ENCODE measurements at regions of chr7 and their contacts with region 1.

Region 1: GRCh38 chr7:129468087-129468486 is 33.9 kb downstream of the STRIP2 start:
- DNase-seq: peak; percentile 20
- H3K4me3 ChIP-seq: no peak overlapping the region
- H3K27ac ChIP-seq: no peak overlapping the region
- H3K4me1 ChIP-seq: peaks cover 6% of the 10 kb centered on the region
- H3K27me3 ChIP-seq: no peaks in the 10 kb centered on the region
- CTCF ChIP-seq: no peak

Region 2: DNA sequence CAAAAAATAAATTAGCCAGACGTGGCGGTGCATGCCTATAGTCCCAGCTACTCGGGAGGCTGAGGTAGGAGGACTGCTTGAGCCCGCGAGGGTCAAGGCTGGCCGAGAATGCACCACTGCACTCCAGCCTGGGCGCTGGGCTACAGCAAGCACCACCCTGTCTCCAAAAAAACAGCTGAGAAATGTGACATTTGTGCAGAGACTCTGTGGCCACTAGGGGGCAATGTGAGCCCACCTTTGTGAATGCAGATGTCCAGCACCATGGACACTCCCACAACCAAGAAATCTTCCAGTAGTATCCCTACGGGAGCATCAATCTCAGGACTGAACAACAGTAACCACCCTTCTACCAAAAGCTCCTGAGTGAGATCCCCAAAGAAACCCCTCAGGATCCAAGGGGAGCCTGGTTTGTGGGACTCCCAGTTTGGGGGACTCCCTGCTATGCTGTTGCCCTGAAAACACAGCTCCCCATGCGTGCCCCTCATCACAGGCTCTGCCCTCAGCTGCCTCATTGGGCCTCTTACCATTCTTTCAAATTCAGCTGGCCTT is 249.5 kb before region 1 on chr7:
- CTCF ChIA-PET with region 1: no interaction called
- dilution Hi-C with region 1: no loop called
- in situ Hi-C with region 1: loop called (anchors 10 kb)
- intact Hi-C with region 1: loop called (anchors 1 kb)
- DNase-seq: peak; percentile 72
- H3K4me3 ChIP-seq: no peak overlapping the region
- H3K27ac ChIP-seq: no peak overlapping the region
- H3K4me1 ChIP-seq: no peaks in the 10 kb centered on the region
- H3K27me3 ChIP-seq: no peaks in the 10 kb centered on the region
- CTCF ChIP-seq: peak; percentile 88 to 89

Region 3: GRCh38 chr7:129298268-129298893 is 169.7 kb before region 1 on chr7:
- CTCF ChIA-PET with region 1: no interaction called
- dilution Hi-C with region 1: no loop called
- in situ Hi-C with region 1: no loop called
- intact Hi-C with region 1: loop called (anchors 5 kb)
- DNase-seq: peak; percentile 25
- H3K4me3 ChIP-seq: no peak overlapping the region
- H3K27ac ChIP-seq: no peak overlapping the region
- H3K4me1 ChIP-seq: peaks cover 6% of the 10 kb centered on the region
- H3K27me3 ChIP-seq: no peaks in the 10 kb centered on the region
- CTCF ChIP-seq: peak; percentile 77 to 80

Region 4: GRCh38 chr7:129367700-129368388 is 100.2 kb before region 1 on chr7:
- CTCF ChIA-PET with region 1: interaction called, 5 read pairs
- dilution Hi-C with region 1: no loop called
- in situ Hi-C with region 1: loop called in 1 of 2 experiments (anchors 10 kb)
- intact Hi-C with region 1: loop called (anchors 1 kb)
- DNase-seq: peak; percentile 42
- H3K4me3 ChIP-seq: no peak overlapping the region
- H3K27ac ChIP-seq: no peak overlapping the region
- H3K4me1 ChIP-seq: no peaks in the 10 kb centered on the region
- H3K27me3 ChIP-seq: no peaks in the 10 kb centered on the region
- CTCF ChIP-seq: peak; percentile 82 to 89

Region 5: DNA sequence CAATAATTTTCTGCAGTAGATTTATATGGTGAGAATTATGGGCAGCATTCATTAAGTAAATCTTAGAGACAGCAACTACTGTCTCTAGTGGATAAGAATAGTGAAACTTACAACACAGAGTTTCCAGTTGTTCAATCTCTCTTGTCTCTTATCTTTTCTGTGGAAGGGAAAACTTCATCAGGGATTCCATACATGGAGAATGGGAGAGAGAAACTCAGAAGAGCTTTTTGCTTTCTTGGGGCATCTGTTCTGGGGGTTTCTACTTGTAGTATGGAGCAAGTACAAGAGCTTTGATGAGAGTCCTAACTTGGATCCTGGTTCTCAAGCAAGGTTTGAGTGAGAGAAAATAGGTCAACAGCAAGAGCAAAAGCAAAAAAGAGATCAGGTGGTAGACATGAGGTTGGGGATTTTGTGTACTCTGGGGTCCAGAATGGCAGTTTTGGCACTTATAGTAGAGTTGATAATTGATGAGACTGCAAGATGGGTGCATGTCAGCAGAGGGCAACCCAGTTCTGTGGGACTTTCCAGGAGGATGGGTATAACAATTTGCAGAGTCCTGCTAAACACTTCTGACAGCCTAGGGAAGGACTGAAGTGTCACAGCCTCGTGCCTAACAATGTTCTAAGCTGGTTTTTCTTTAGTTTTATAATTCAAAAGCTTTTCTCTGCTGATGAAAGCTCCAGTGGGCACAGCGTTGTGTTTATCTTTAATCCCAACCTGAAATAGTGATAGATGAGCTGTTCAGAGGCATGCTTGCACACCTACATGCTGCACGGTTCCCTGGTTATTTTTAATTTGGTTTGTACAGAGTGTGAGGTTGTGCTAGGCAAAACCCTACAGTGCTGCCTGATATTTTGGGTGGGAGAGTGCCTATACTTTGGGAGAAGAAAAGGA is 65.9 kb before region 1 on chr7:
- CTCF ChIA-PET with region 1: no interaction called
- dilution Hi-C with region 1: no loop called
- in situ Hi-C with region 1: no loop called
- intact Hi-C with region 1: loop called (anchors 1 kb)
- DNase-seq: no peak
- H3K4me3 ChIP-seq: no peak overlapping the region
- H3K27ac ChIP-seq: no peak overlapping the region
- H3K4me1 ChIP-seq: no peaks in the 10 kb centered on the region
- H3K27me3 ChIP-seq: no peaks in the 10 kb centered on the region
- CTCF ChIP-seq: peak in 1 of 2 donors; percentile 25

Region 6: GRCh38 chr7:129611246-129612111 is 143.4 kb after region 1 on chr7 and contains the start of gene NRF1:
- CTCF ChIA-PET with region 1: no interaction called
- dilution Hi-C with region 1: no loop called
- in situ Hi-C with region 1: no loop called
- intact Hi-C with region 1: loop called (anchors 1 kb)
- DNase-seq: peak; percentile 90
- H3K4me3 ChIP-seq: peak within 1 kb of the TSS; percentile 77 to 95 (median 87)
- H3K27ac ChIP-seq: peak within 1 kb of the TSS; percentile 80
- H3K4me1 ChIP-seq: peaks cover 27% of the 10 kb centered on the region
- H3K27me3 ChIP-seq: no peaks in the 10 kb centered on the region
- CTCF ChIP-seq: peak in 1 of 2 donors; percentile 12
- total RNA-seq, gene NRF1: 11.3 to 14.3 TPM

Region 7: DNA sequence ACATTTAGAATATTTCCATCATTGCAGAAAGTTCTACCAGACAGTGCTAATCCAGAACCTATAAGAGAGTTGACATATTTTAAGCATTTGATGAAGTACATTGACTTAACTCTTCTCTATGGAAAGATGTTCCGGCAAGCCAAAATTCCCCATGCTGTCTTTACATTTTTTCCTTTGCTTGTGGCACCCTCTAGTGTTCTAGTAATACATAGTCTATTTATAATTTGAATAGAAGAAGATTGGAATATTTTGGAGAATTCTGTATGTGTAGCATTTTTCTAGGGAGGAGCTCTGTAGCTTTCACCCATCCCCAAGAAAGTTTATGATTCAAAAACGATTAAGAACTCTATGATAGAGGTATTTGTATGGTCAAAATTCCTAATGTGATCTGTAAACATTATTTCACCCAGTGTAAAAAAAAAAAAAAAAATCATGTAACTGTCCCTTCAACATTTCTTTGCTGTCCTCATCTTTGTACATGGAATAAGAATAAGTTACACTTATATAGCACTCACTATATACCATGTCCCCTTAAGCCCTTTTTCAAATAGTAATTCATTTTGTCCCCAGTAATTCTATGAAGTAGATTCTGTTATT is 176.6 kb after region 1 on chr7:
- CTCF ChIA-PET with region 1: no interaction called
- dilution Hi-C with region 1: no loop called
- in situ Hi-C with region 1: no loop called
- intact Hi-C with region 1: loop called (anchors 1 kb)
- DNase-seq: peak; percentile 35
- H3K4me3 ChIP-seq: no peak overlapping the region
- H3K27ac ChIP-seq: no peak overlapping the region
- H3K4me1 ChIP-seq: peaks cover 2% of the 10 kb centered on the region
- H3K27me3 ChIP-seq: no peaks in the 10 kb centered on the region
- CTCF ChIP-seq: peak; percentile 35 to 54

Region 8: GRCh38 chr7:129676017-129676897 is 208.2 kb after region 1 on chr7:
- CTCF ChIA-PET with region 1: no interaction called
- dilution Hi-C with region 1: no loop called
- in situ Hi-C with region 1: no loop called
- intact Hi-C with region 1: no loop called
- DNase-seq: no peak
- H3K4me3 ChIP-seq: no peak overlapping the region
- H3K27ac ChIP-seq: no peak overlapping the region
- H3K4me1 ChIP-seq: no peaks in the 10 kb centered on the region
- H3K27me3 ChIP-seq: no peaks in the 10 kb centered on the region
- CTCF ChIP-seq: no peak